ENCODE measurements at regions of chr2 and their contacts with region 1.

Region 1: DNA sequence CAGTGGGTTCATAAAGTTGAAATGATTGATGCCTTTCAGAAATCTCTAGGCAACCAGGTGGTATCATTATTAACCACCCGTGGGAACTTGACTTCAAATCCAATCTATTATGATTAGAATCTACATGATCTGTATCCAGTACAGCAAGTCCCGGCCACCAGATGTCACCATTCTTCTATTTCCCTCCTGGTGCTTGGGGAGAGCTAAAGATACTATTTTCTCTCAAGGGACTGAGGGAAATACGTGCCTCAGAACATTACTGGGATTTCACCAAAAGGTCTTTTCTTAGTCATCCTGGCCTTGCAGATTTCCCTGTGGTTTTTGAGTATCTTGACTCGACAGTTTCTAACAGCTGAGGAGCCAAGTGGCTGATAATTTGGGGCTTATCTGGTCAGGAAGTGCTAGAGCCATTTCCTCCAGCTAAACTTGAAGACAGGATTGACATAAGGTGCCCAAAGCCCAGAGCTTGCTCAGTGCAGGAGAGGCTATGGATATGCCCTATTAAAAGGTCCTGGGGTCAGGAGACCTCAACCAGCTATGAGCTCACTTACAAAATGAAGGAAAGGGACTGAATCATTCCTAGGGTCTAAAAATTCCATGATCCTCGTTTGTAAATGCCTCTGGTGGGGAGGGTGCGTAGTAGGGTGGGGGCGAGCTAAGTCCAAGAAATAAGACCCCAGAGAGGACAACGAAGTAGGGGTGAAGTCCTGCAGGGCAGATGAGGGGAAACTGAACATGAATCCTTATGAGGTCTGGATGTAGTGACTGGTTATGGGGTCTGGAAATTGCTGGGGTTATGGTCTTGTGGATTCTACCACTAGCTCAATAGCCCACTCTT is 135.4 kb upstream of the MGAT5 start:
- DNase-seq: peak; percentile 65 to 88 (median 75)
- H3K4me3 ChIP-seq: no peak overlapping the region
- H3K4me3 Mint-ChIP-seq: peak overlapping the region; percentile 84 to 99 (median 97)
- H3K27ac ChIP-seq: no peak overlapping the region
- H3K27ac Mint-ChIP-seq: peak overlapping the region; percentile 1 to 98 (median 81)
- H3K4me1 ChIP-seq: peaks cover 35% of the 10 kb centered on the region
- H3K4me1 Mint-ChIP-seq: peaks cover 34 to 39% (median 38%) of the 10 kb centered on the region in 3 donors
- H3K27me3 ChIP-seq: no peaks in the 10 kb centered on the region
- H3K27me3 Mint-ChIP-seq: peaks cover 0 to 3% of the 10 kb centered on the region in 2 donors

Region 2: GRCh38 chr2:133886735-133887660 is 231.5 kb before region 1 on chr2:
- CTCF ChIA-PET with region 1: interaction called, 11 read pairs
- POLR2A ChIA-PET with region 1: no interaction called
- DNase-seq: peak; percentile 11 to 60 (median 19)
- H3K4me3 ChIP-seq: no peak overlapping the region
- H3K4me3 Mint-ChIP-seq: no peak overlapping the region
- H3K27ac ChIP-seq: no peak overlapping the region
- H3K27ac Mint-ChIP-seq: no peak overlapping the region
- H3K4me1 ChIP-seq: no peaks in the 10 kb centered on the region
- H3K4me1 Mint-ChIP-seq: peaks cover 0 to 6% (median 0%) of the 10 kb centered on the region in 3 donors
- H3K27me3 ChIP-seq: no peaks in the 10 kb centered on the region
- H3K27me3 Mint-ChIP-seq: peaks cover 14 to 30% of the 10 kb centered on the region in 2 donors

Region 3: DNA sequence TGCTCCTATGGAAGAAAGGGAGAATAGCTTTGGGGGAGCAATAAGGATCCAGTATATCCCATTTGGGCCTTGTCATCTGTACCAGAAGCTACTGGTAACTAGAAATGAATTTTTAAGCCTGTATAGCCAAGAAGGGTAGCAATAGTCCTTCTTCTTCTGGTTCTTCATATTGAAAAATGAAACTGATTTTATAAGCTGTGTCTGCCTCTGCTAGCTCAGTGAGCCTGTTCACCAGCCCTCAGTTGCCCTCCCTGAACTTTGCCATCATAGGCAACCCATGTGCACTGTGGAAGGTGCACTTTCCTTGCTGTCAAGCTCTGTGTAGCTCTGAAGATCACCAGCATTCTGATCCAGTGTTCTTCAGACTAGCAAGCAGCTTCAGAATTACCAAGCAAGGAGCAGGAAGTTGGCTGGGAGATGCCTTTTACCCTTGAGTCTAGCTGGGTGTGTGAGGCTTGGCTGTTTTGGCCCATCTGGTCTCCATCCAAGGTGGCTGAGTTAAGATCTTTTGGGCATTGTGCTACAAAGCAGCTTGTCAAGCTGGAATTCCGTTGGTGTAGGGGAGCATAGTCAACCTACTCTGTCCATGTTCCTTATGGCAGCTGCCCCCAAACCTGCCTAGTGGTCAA is 79.6 kb after region 1 on chr2:
- CTCF ChIA-PET with region 1: interaction called, 21 read pairs
- POLR2A ChIA-PET with region 1: interaction called, 3 read pairs
- DNase-seq: no peak
- H3K4me3 ChIP-seq: peak overlapping the region; percentile 15
- H3K4me3 Mint-ChIP-seq: peak overlapping the region in 5 of 7 donors; percentile 50 to 80 (median 73)
- H3K27ac ChIP-seq: no peak overlapping the region
- H3K27ac Mint-ChIP-seq: peak overlapping the region in 6 of 8 donors; percentile 43 to 87 (median 70)
- H3K4me1 ChIP-seq: peaks cover 31% of the 10 kb centered on the region
- H3K4me1 Mint-ChIP-seq: peaks cover 73 to 90% (median 87%) of the 10 kb centered on the region in 3 donors
- H3K27me3 ChIP-seq: no peaks in the 10 kb centered on the region
- H3K27me3 Mint-ChIP-seq: no peaks in the 10 kb centered on the region

Region 4: DNA sequence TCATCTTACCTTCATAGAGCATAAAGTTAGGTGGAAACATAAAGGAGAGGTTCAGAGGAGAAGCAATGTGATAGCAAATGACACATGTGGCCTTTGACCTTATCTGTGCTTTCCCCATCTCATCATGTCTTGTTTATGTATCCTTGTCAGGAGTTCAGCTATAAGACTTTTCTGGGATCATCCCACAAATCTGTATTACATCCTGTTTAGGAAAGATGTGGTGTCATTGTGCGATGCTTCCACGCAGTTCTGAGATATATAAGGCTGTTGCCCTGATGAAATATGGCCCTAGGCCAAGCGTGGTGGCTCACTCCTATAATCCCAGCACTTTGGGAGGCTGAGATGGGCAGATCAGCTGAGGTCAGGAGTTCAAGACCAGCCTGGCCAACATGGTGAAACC is 119.9 kb after region 1 on chr2:
- CTCF ChIA-PET with region 1: interaction called, 85 read pairs
- POLR2A ChIA-PET with region 1: no interaction called
- DNase-seq: no peak
- H3K4me3 ChIP-seq: no peak overlapping the region
- H3K4me3 Mint-ChIP-seq: no peak overlapping the region
- H3K27ac ChIP-seq: no peak overlapping the region
- H3K27ac Mint-ChIP-seq: peak overlapping the region in 4 of 8 donors; percentile 35 to 63 (median 58)
- H3K4me1 ChIP-seq: peaks cover 43% of the 10 kb centered on the region
- H3K4me1 Mint-ChIP-seq: peaks cover 67 to 90% (median 80%) of the 10 kb centered on the region in 3 donors
- H3K27me3 ChIP-seq: no peaks in the 10 kb centered on the region
- H3K27me3 Mint-ChIP-seq: no peaks in the 10 kb centered on the region

Region 5: GRCh38 chr2:134411828-134412638 is 293.5 kb after region 1 on chr2:
- CTCF ChIA-PET with region 1: interaction called, 101 read pairs
- POLR2A ChIA-PET with region 1: interaction called, 17 read pairs
- DNase-seq: peak; percentile 26 to 80 (median 56)
- H3K4me3 ChIP-seq: no peak overlapping the region
- H3K4me3 Mint-ChIP-seq: peak overlapping the region in 3 of 7 donors; percentile 9 to 51 (median 22)
- H3K27ac ChIP-seq: no peak overlapping the region
- H3K27ac Mint-ChIP-seq: peak overlapping the region in 3 of 8 donors; percentile 25 to 66 (median 62)
- H3K4me1 ChIP-seq: peaks cover 25% of the 10 kb centered on the region
- H3K4me1 Mint-ChIP-seq: peaks cover 48 to 54% (median 54%) of the 10 kb centered on the region in 3 donors
- H3K27me3 ChIP-seq: no peaks in the 10 kb centered on the region
- H3K27me3 Mint-ChIP-seq: no peaks in the 10 kb centered on the region

Measured in CD8-positive, alpha-beta memory T cell (primary cell).